ENCODE measurements at regions of chr2 and their contacts with region 1.

Region 1: GRCh38 chr2:230902180-230902899 is 22.7 kb downstream of the GPR55 start:
- DNase-seq: peak; percentile 41
- H3K4me3 ChIP-seq: no peak overlapping the region
- H3K27ac ChIP-seq: no peak overlapping the region
- H3K4me1 ChIP-seq: no peaks in the 10 kb centered on the region
- H3K27me3 ChIP-seq: no peaks in the 10 kb centered on the region
- CTCF ChIP-seq: peak; percentile 94 to 96

Region 2: GRCh38 chr2:230924470-230925341 is 22.4 kb after region 1 on chr2 and contains the start of gene GPR55:
- CTCF ChIA-PET with region 1: no interaction called
- dilution Hi-C with region 1: no loop called
- in situ Hi-C with region 1: no loop called
- intact Hi-C with region 1: loop called (anchors 2 kb)
- DNase-seq: no peak
- H3K4me3 ChIP-seq: no peak within 1 kb of the TSS
- H3K27ac ChIP-seq: no peak within 1 kb of the TSS
- H3K4me1 ChIP-seq: peaks cover 12% of the 10 kb centered on the region
- H3K27me3 ChIP-seq: no peaks in the 10 kb centered on the region
- CTCF ChIP-seq: peak; percentile 20 to 50
- total RNA-seq, gene GPR55: not detected

Region 3: DNA sequence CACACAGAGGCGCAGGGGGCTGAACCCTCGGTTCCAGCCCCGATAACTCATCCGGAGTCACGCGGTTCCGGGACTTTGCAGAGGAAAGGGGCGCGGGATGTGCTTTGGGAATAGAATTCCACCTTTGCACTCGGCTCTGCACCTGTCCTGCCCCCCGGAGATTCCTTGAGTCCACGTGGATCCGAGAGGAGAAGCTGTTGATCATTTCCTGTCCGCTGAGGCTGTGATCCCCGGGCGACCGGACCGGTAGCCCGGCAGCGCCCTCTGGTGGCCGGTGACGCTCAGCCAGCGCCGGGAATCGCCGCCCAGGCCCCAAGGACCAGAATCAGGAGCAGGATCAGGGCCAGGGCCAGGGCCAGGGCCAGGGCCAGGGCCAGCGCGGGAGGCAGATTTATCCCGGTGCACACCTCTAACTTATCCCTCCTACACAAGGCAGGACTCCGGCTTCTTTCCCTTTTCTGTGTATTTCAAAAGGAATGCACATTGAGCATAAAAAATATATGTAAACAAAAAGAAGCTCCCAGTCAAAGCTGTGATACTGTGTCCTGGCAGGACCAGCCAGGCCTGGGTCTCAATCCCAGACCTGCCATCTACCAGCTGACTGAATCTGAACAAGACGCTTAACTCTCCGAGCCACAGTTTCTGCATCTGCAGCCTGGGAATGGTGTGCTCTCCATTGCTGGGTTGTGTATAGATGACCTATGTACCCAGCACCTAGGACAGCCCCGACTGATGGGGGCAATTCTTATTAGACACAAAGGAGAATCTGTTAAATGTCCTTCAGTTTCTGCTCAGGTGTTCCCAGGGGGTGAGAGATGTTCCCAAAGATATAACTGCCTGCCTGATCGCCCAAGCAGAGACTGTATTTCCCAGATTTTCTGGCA is 85.0 kb after region 1 on chr2:
- CTCF ChIA-PET with region 1: interaction called, 3 read pairs
- dilution Hi-C with region 1: no loop called
- in situ Hi-C with region 1: loop called (anchors 5 kb)
- intact Hi-C with region 1: loop called (anchors 1 kb)
- DNase-seq: peak; percentile 44
- H3K4me3 ChIP-seq: peak overlapping the region; percentile 6 to 14 (median 10)
- H3K27ac ChIP-seq: no peak overlapping the region
- H3K4me1 ChIP-seq: no peaks in the 10 kb centered on the region
- H3K27me3 ChIP-seq: no peaks in the 10 kb centered on the region
- CTCF ChIP-seq: peak; percentile 64 to 93

Region 4: DNA sequence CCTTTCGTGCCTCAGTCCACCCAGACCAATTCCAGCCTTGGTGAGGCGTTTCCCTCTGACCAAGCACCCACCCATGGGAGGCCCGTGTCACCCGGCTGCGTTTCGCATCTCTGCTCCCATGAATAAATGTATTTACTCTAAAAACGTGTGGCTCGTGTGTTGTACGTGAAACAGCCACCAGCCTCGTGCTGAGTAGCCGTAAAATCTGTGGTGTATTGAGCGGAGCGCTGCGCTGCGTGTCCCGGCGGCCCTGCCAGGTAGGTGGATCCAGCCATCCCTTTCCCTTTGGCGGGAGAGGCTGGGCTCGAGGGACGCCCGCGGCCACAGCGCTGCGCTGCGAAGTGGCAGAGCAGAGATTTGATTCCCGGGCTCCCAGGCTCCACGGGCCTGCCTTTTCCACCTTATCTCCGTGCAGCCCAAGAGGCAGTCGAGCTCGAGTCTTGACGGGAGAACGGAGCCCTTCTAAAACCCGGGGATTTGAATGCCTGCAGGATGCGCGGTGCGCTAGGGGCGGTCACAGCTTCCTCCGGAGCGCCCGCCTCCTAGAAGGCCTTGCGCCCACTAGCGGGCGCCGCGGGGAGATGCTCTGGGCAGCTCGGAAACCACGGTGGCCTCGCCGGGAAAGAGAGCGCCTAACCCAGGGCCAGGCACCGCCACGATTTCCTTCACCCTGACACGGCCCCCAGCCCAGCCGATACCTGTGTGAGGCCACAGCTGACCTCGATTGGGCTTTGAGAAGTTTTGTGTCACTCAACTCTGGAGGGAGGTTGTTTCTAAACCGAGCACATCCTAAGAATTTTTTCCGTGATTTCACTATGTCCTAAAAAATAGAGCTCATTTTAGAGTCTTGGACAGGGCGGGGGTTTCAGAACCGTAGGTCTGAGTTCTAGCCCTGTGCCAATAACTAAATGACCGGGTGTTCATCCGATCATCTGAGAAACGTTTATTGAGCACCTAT is 150.4 kb after region 1 on chr2:
- CTCF ChIA-PET with region 1: no interaction called
- dilution Hi-C with region 1: loop called (anchors 10 kb)
- in situ Hi-C with region 1: no loop called
- intact Hi-C with region 1: loop called (anchors 1 kb)
- DNase-seq: peak; percentile 77
- H3K4me3 ChIP-seq: peak overlapping the region; percentile 59 to 62 (median 60)
- H3K27ac ChIP-seq: no peak overlapping the region
- H3K4me1 ChIP-seq: peaks cover 7% of the 10 kb centered on the region
- H3K27me3 ChIP-seq: no peaks in the 10 kb centered on the region
- CTCF ChIP-seq: peak; percentile 72 to 91

Measured in mammary epithelial cell (primary cell).